Posterior vena cava (tissue), 2 donors: ENCODE measurements at regions of chr14 and their contacts with region 1.

Region 1: GRCh38 chr14:50532502-50533240 is at the start of gene MAP4K5:
- DNase-seq: peak; percentile 97
- total RNA-seq, gene MAP4K5: 44.9 to 48.4 TPM

Region 2: GRCh38 chr14:49017447-49017846 is 1515.2 kb before region 1 on chr14:
- intact Hi-C with region 1: no loop called
- DNase-seq: no peak

Region 3: GRCh38 chr14:50321009-50321660 is 211.5 kb before region 1 on chr14:
- intact Hi-C with region 1: loop called (anchors 5 kb)
- DNase-seq: no peak

Region 4: GRCh38 chr14:50569714-50570274 is 37.1 kb after region 1 on chr14:
- intact Hi-C with region 1: no loop called
- DNase-seq: no peak